AG04450 (cell line): ENCODE measurements at regions of chr12 and their contacts with region 1.

Region 1: DNA sequence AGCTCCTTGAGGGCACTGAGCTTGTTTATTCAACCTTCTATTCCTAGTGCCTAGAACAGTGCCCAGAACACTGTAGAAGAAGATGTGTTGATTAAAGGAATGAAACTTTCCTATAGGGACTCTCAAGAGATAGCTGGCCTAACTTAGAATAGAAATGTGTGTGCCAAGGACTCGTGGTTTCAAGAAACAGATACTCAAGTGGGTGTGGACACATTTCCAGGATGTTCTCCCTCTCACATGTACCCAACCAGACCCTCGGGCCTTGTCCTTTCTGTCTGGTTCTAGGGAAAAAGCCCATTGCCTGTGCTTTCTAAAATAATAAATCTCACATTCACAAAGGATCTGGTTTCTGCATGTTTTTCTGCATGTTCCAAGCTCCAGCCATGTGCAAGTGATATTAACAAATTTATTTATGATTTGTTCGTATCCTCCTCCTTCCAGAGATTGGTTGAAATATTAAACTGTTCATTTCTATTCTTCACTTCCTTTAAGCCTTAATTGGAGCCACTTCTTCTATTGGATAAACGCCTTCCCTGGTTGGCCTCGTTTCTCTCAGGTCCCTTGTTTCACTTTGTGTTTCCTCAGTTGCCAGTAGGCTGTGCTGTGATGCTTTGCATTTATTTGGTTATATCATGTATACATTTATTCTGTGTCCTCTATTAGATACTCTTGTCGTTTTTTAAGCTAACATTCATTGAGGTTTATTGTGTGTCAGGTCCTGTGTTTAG is 89.8 kb downstream of the CRADD start:
- DNase-seq: no peak
- H3K4me3 ChIP-seq: no peak overlapping the region
- H3K27ac ChIP-seq: no peak overlapping the region
- H3K27me3 ChIP-seq: no peaks in the 10 kb centered on the region
- CTCF ChIP-seq: peak; percentile 72

Region 2: GRCh38 chr12:93802698-93803423 is 35.9 kb after region 1 on chr12:
- CTCF ChIA-PET with region 1: interaction called, 10 read pairs
- POLR2A ChIA-PET with region 1: no interaction called
- DNase-seq: no peak
- H3K4me3 ChIP-seq: peak overlapping the region; percentile 15; the same call in 1 of the 2 replicates
- H3K27ac ChIP-seq: peak overlapping the region; percentile 63
- H3K27me3 ChIP-seq: no peaks in the 10 kb centered on the region
- CTCF ChIP-seq: peak; percentile 51